Activated T-helper 1 cell treated with anti-CD3 and anti-CD28 coated beads, Interleukin-12 subunit alpha, Interleukin-12 subunit beta, Interleukin-2, Interleukin-4 antibody, amounts not matched to agents 30 ng/mL and 10 ng/mL and 1 ng/mL, durations not matched to agents 14 hours and 24 hours and 36 hours (primary cell): ENCODE measurements at regions of chr3 and their contacts with region 1.

Region 1: DNA sequence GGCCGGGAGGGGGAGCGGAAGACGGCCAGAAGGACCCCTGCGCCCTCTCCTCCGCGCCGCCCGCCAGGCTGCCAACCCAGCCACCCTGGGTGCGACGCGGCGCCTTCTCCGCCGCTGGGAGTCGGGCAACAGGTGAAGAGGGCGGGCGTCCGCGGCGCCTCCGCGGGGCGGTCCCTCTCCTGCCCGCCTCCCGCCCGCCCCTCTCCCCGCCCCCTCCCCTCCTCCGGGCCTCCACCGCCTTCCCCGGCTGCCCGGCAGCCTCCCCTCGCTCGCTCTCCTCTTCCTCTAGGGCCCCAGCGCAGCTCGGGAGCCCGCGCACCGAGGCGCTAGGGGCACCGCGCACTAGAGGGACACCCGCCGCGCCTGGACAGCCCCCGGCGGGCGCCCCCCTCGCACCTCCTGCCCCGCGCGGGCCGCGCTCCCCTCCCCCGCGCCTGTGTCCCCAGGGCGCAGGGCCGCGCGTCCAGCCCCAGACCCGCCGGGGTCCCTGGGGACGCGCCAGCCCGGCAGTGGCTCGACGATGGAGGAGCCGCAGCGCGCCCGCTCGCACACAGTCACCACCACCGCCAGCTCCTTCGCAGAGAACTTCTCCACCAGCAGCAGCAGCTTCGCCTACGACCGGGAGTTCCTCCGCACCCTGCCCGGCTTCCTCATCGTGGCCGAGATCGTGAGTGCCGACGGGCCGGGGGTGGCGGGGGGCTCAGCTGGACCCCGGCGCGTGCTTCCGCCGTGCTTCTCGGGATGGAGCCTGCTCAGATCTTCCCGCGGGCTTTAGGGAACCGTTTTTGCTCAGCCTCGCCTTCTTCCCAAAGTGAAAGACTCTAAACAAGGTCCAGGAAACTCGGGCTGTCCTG is at the start of gene CMTM8:
- DNase-seq: peak; percentile 54
- H3K4me3 Mint-ChIP-seq: peak within 1 kb of the TSS; percentile 86
- H3K27ac Mint-ChIP-seq: peak within 1 kb of the TSS; percentile 53
- H3K4me1 Mint-ChIP-seq: peaks cover 25% of the 10 kb centered on the region
- H3K27me3 Mint-ChIP-seq: peaks cover 31% of the 10 kb centered on the region
- total RNA-seq, gene CMTM8: 5.0 and 5.7 TPM in 2 replicates

Region 2: DNA sequence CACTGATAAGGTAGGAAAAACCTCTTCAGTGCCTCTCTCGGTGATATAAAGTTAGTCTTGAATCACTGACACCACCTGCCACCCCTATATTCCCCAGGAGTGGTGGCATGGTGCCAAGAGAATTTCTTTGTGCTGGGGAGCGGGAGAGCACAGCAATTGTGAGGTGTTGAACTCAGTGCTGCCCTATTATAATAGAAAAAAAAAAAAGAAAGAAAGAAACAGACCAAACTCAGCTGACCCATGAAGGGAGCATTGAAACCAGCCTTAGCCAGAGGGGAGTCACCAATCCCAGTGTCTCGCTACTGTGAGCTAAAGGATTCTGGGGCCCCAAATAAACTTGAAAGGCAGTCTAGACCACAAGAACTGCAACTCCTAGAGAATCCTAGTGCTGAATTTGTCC is 907.4 kb before region 1 on chr3:
- intact Hi-C with region 1: loop called (anchors 10 kb)
- DNase-seq: no peak
- H3K4me3 Mint-ChIP-seq: no peak overlapping the region
- H3K27ac Mint-ChIP-seq: no peak overlapping the region
- H3K4me1 Mint-ChIP-seq: no peaks in the 10 kb centered on the region
- H3K27me3 Mint-ChIP-seq: peaks cover 4% of the 10 kb centered on the region

Region 3: GRCh38 chr3:32117324-32117723 is 121.4 kb before region 1 on chr3:
- intact Hi-C with region 1: loop called (anchors 1 kb)
- DNase-seq: no peak
- H3K4me3 Mint-ChIP-seq: no peak overlapping the region
- H3K27ac Mint-ChIP-seq: no peak overlapping the region
- H3K4me1 Mint-ChIP-seq: peaks cover 34% of the 10 kb centered on the region
- H3K27me3 Mint-ChIP-seq: no peaks in the 10 kb centered on the region

Region 4: GRCh38 chr3:32391643-32392535 is 153.2 kb after region 1 on chr3 and contains the start of gene CMTM7:
- intact Hi-C with region 1: loop called (anchors 5 kb)
- DNase-seq: peak; percentile 66
- H3K4me3 Mint-ChIP-seq: peak within 1 kb of the TSS; percentile 98
- H3K27ac Mint-ChIP-seq: peak within 1 kb of the TSS; percentile 98
- H3K4me1 Mint-ChIP-seq: peaks cover 61% of the 10 kb centered on the region
- H3K27me3 Mint-ChIP-seq: no peaks in the 10 kb centered on the region
- total RNA-seq, gene CMTM7: 50.6 and 59.7 TPM in 2 replicates

Region 5: GRCh38 chr3:33113772-33114621 is 875.3 kb after region 1 on chr3 and contains the start of gene CRTAP:
- intact Hi-C with region 1: loop called (anchors 10 kb)
- DNase-seq: peak; percentile 78
- H3K4me3 Mint-ChIP-seq: peak within 1 kb of the TSS; percentile 87
- H3K27ac Mint-ChIP-seq: peak within 1 kb of the TSS; percentile 74
- H3K4me1 Mint-ChIP-seq: peaks cover 26% of the 10 kb centered on the region
- H3K27me3 Mint-ChIP-seq: no peaks in the 10 kb centered on the region
- total RNA-seq, gene CRTAP: 30.3 and 33.2 TPM in 2 replicates